ENCODE measurements at regions of chr5 and their contacts with region 1.

Region 1: GRCh38 chr5:157312492-157312891 is 46.6 kb downstream of the CYFIP2 start:
- DNase-seq: peak; percentile 59
- ATAC-seq: peak; percentile 96
- H3K4me3 ChIP-seq: no peak overlapping the region
- H3K27ac ChIP-seq: no peak overlapping the region
- H3K4me1 ChIP-seq: no peaks in the 10 kb centered on the region
- H3K27me3 ChIP-seq: no peaks in the 10 kb centered on the region
- CTCF ChIP-seq: peak; percentile 80 to 86 (median 80)
- EP300 ChIP-seq: no peak
- POLR2A ChIP-seq: no peak
- RAD21 ChIP-seq: peak; percentile 72

Region 2: GRCh38 chr5:156893517-156893916 is 419.0 kb before region 1 on chr5:
- CTCF ChIA-PET with region 1: no interaction called
- POLR2A ChIA-PET with region 1: no interaction called
- RAD21 ChIA-PET with region 1: no interaction called
- SMC1A ChIA-PET with region 1: no interaction called
- in situ Hi-C with region 1: no loop called
- intact Hi-C with region 1: no loop called
- DNase-seq: peak; percentile 52
- ATAC-seq: peak; percentile 82
- H3K4me3 ChIP-seq: no peak overlapping the region
- H3K27ac ChIP-seq: peak overlapping the region; percentile 47; the same call in 1 of the 2 replicates
- H3K4me1 ChIP-seq: peaks cover 23% of the 10 kb centered on the region
- H3K27me3 ChIP-seq: no peaks in the 10 kb centered on the region
- CTCF ChIP-seq: no peak
- EP300 ChIP-seq: peak in 1 of 2 experiments; percentile 51; a peak in 1 of 4 replicates
- POLR2A ChIP-seq: no peak
- RAD21 ChIP-seq: no peak

Region 3: GRCh38 chr5:157167214-157167621 is 145.3 kb before region 1 on chr5:
- CTCF ChIA-PET with region 1: interaction called, 15 read pairs
- POLR2A ChIA-PET with region 1: no interaction called
- RAD21 ChIA-PET with region 1: interaction called, 3 read pairs
- SMC1A ChIA-PET with region 1: no interaction called
- in situ Hi-C with region 1: no loop called
- intact Hi-C with region 1: no loop called
- DNase-seq: peak; percentile 16
- ATAC-seq: peak; percentile 72
- H3K4me3 ChIP-seq: no peak overlapping the region
- H3K27ac ChIP-seq: no peak overlapping the region
- H3K4me1 ChIP-seq: peaks cover 10% of the 10 kb centered on the region
- H3K27me3 ChIP-seq: no peaks in the 10 kb centered on the region; a peak in 1 of 4 replicates
- CTCF ChIP-seq: no peak
- EP300 ChIP-seq: no peak
- POLR2A ChIP-seq: no peak
- RAD21 ChIP-seq: no peak

Region 4: DNA sequence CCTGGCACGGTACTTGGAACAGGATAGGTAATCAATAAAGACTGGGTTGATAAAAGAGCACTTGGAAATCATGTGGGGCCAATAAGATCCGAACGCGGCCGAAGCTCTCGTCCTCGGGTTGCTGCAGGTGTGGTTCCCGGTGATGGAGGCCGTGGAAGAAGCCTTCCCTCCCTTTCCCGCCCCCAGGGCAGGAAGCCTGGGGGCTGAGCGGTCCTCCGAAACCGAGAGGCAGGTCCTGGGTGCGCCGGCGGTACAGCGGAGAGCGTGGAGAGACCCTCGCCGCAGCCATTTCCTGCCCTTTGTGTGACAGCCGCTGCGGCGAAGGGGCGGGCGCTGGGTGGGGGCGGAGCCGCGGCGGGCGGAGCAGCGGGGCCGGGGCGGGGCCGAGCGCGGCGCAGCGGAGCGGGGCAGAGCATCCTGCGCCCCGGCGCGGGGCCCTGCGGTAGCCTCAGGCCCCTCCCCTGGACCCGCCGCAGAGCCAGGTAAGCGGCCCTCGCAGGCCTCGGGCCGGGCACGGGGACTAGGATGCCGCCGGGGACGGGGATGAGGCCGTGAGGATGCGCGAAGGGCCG is 46.7 kb before region 1 on chr5 and contains the start of gene CYFIP2:
- CTCF ChIA-PET with region 1: interaction called, 213 read pairs
- POLR2A ChIA-PET with region 1: interaction called, 6 read pairs
- RAD21 ChIA-PET with region 1: interaction called, 11 read pairs
- SMC1A ChIA-PET with region 1: interaction called, 16 read pairs
- in situ Hi-C with region 1: no loop called
- intact Hi-C with region 1: loop called (anchors 5 kb)
- DNase-seq: no peak
- ATAC-seq: peak; percentile 87
- H3K4me3 ChIP-seq: peak within 1 kb of the TSS; percentile 91
- H3K27ac ChIP-seq: peak within 1 kb of the TSS; percentile 83
- H3K4me1 ChIP-seq: peaks cover 37% of the 10 kb centered on the region
- H3K27me3 ChIP-seq: no peaks in the 10 kb centered on the region
- CTCF ChIP-seq: no peak
- EP300 ChIP-seq: no peak
- POLR2A ChIP-seq: peak; percentile 80
- RAD21 ChIP-seq: no peak
- polyA plus RNA-seq, gene CYFIP2: 43.4 to 68.6 TPM

Region 5: GRCh38 chr5:157328277-157328912 is 15.9 kb after region 1 on chr5:
- CTCF ChIA-PET with region 1: interaction called, 16 read pairs
- POLR2A ChIA-PET with region 1: no interaction called
- RAD21 ChIA-PET with region 1: interaction called, 3 read pairs
- SMC1A ChIA-PET with region 1: interaction called, 4 read pairs
- in situ Hi-C with region 1: no loop called
- intact Hi-C with region 1: no loop called
- DNase-seq: no peak
- ATAC-seq: peak; percentile 100
- H3K4me3 ChIP-seq: no peak overlapping the region
- H3K27ac ChIP-seq: no peak overlapping the region
- H3K4me1 ChIP-seq: no peaks in the 10 kb centered on the region
- H3K27me3 ChIP-seq: no peaks in the 10 kb centered on the region
- CTCF ChIP-seq: peak; percentile 85 to 94 (median 91)
- EP300 ChIP-seq: no peak
- POLR2A ChIP-seq: no peak
- RAD21 ChIP-seq: peak; percentile 85